GM12878 (cell line): ENCODE measurements at regions of chr4 and their contacts with region 1.

Region 1: GRCh38 chr4:147843162-147843561 is 111.3 kb downstream of the ARHGAP10 start:
- DNase-seq: no peak
- ATAC-seq: peak; percentile 71
- H3K4me3 ChIP-seq: no peak overlapping the region
- H3K27ac ChIP-seq: no peak overlapping the region
- H3K4me1 ChIP-seq: peaks cover 28% of the 10 kb centered on the region
- H3K27me3 ChIP-seq: no peaks in the 10 kb centered on the region
- CTCF ChIP-seq: peak; percentile 35 to 50 (median 37); a peak in 5 of 6 replicates
- EP300 ChIP-seq: no peak
- POLR2A ChIP-seq: no peak
- RAD21 ChIP-seq: peak; percentile 30; the same call in 1 of the 2 replicates

Region 2: GRCh38 chr4:147707865-147708672 is 135.1 kb before region 1 on chr4:
- CTCF ChIA-PET with region 1: interaction called, 13 read pairs
- POLR2A ChIA-PET with region 1: interaction called, 4 read pairs
- RAD21 ChIA-PET with region 1: interaction called, 10 read pairs
- SMC1A ChIA-PET with region 1: interaction called, 17 read pairs
- in situ Hi-C with region 1: no loop called
- intact Hi-C with region 1: no loop called
- DNase-seq: no peak
- ATAC-seq: peak; percentile 82
- H3K4me3 ChIP-seq: no peak overlapping the region
- H3K27ac ChIP-seq: no peak overlapping the region
- H3K4me1 ChIP-seq: peaks cover 3% of the 10 kb centered on the region
- H3K27me3 ChIP-seq: no peaks in the 10 kb centered on the region
- CTCF ChIP-seq: peak; percentile 76 to 92 (median 87)
- EP300 ChIP-seq: no peak
- POLR2A ChIP-seq: no peak
- RAD21 ChIP-seq: peak; percentile 95

Region 3: GRCh38 chr4:147780137-147780777 is 62.9 kb before region 1 on chr4:
- CTCF ChIA-PET with region 1: interaction called, 22 read pairs
- POLR2A ChIA-PET with region 1: no interaction called
- RAD21 ChIA-PET with region 1: interaction called, 19 read pairs
- SMC1A ChIA-PET with region 1: interaction called, 16 read pairs
- in situ Hi-C with region 1: no loop called
- intact Hi-C with region 1: loop called (anchors 5 kb)
- DNase-seq: peak; percentile 86
- ATAC-seq: peak; percentile 84
- H3K4me3 ChIP-seq: peak overlapping the region; percentile 67; the same call in 1 of the 2 replicates
- H3K27ac ChIP-seq: peak overlapping the region; percentile 98
- H3K4me1 ChIP-seq: peaks cover 44% of the 10 kb centered on the region
- H3K27me3 ChIP-seq: no peaks in the 10 kb centered on the region
- CTCF ChIP-seq: no peak
- EP300 ChIP-seq: peak; percentile 8 to 61; a peak in 1 of 4 replicates
- POLR2A ChIP-seq: peak; percentile 71
- RAD21 ChIP-seq: no peak

Region 4: GRCh38 chr4:147786031-147786430 is 57.1 kb before region 1 on chr4:
- CTCF ChIA-PET with region 1: interaction called, 22 read pairs
- POLR2A ChIA-PET with region 1: interaction called, 5 read pairs
- RAD21 ChIA-PET with region 1: interaction called, 19 read pairs
- SMC1A ChIA-PET with region 1: interaction called, 16 read pairs
- in situ Hi-C with region 1: no loop called
- intact Hi-C with region 1: loop called (anchors 5 kb)
- DNase-seq: no peak
- ATAC-seq: peak; percentile 93
- H3K4me3 ChIP-seq: 0 out of 2 replicates have a peak overlapping the region, but pooled peaks have one; percentile 22
- H3K27ac ChIP-seq: peak overlapping the region; percentile 87
- H3K4me1 ChIP-seq: peaks cover 48% of the 10 kb centered on the region
- H3K27me3 ChIP-seq: no peaks in the 10 kb centered on the region
- CTCF ChIP-seq: no peak
- EP300 ChIP-seq: peak in 1 of 2 experiments; percentile 74; a peak in 1 of 4 replicates
- POLR2A ChIP-seq: no peak
- RAD21 ChIP-seq: no peak

Region 5: GRCh38 chr4:147793569-147794313 is 49.4 kb before region 1 on chr4:
- CTCF ChIA-PET with region 1: interaction called, 25 read pairs
- POLR2A ChIA-PET with region 1: interaction called, 10 read pairs
- RAD21 ChIA-PET with region 1: interaction called, 13 read pairs
- SMC1A ChIA-PET with region 1: interaction called, 31 read pairs
- in situ Hi-C with region 1: no loop called
- intact Hi-C with region 1: loop called (anchors 5 kb)
- DNase-seq: no peak
- ATAC-seq: peak; percentile 65
- H3K4me3 ChIP-seq: peak overlapping the region; percentile 4; the same call in 1 of the 2 replicates
- H3K27ac ChIP-seq: peak overlapping the region; percentile 72
- H3K4me1 ChIP-seq: peaks cover 37% of the 10 kb centered on the region
- H3K27me3 ChIP-seq: no peaks in the 10 kb centered on the region
- CTCF ChIP-seq: no peak
- EP300 ChIP-seq: no peak
- POLR2A ChIP-seq: no peak
- RAD21 ChIP-seq: no peak

Region 6: GRCh38 chr4:147799986-147800555 is 43.1 kb before region 1 on chr4:
- CTCF ChIA-PET with region 1: interaction called, 25 read pairs
- POLR2A ChIA-PET with region 1: interaction called, 4 read pairs
- RAD21 ChIA-PET with region 1: interaction called, 13 read pairs
- SMC1A ChIA-PET with region 1: interaction called, 31 read pairs
- in situ Hi-C with region 1: no loop called
- intact Hi-C with region 1: loop called (anchors 2 kb)
- DNase-seq: peak; percentile 92
- ATAC-seq: peak; percentile 95
- H3K4me3 ChIP-seq: 0 out of 2 replicates have a peak overlapping the region, but pooled peaks have one; percentile 6
- H3K27ac ChIP-seq: peak overlapping the region; percentile 60
- H3K4me1 ChIP-seq: peaks cover 22% of the 10 kb centered on the region
- H3K27me3 ChIP-seq: no peaks in the 10 kb centered on the region
- CTCF ChIP-seq: 0 out of 6 replicates have a peak, but pooled peaks of 2 of the 3 experiments have one; percentile 4 to 17
- EP300 ChIP-seq: peak; percentile 93 to 94
- POLR2A ChIP-seq: no peak
- RAD21 ChIP-seq: peak; percentile 47

Region 7: DNA sequence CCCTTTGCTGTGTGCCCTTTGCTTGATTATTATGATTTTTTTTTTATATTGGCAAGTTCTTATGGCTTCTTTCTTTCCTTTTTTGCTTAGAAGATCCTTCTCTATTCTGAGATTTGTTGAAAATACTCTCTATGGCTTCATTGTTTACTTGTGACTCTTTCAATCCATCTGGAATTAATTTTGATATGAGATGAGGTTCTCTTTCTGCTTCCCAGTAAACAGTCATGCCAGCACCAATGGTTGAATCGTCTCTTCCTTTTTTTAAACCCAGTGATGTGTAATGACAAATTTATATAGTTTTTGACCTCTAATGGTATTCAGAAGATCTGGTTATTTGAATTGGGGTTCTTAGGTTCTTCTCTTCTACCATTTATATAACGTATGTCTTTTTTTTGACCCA is 10.5 kb after region 1 on chr4:
- CTCF ChIA-PET with region 1: interaction called, 35 read pairs
- POLR2A ChIA-PET with region 1: interaction called, 3 read pairs
- RAD21 ChIA-PET with region 1: interaction called, 8 read pairs
- SMC1A ChIA-PET with region 1: interaction called, 31 read pairs
- in situ Hi-C with region 1: no loop called
- intact Hi-C with region 1: no loop called
- DNase-seq: no peak
- ATAC-seq: no peak
- H3K4me3 ChIP-seq: no peak overlapping the region
- H3K27ac ChIP-seq: no peak overlapping the region
- H3K4me1 ChIP-seq: no peaks in the 10 kb centered on the region
- H3K27me3 ChIP-seq: no peaks in the 10 kb centered on the region
- CTCF ChIP-seq: no peak
- EP300 ChIP-seq: no peak
- POLR2A ChIP-seq: no peak
- RAD21 ChIP-seq: no peak